Activated CD8-positive, alpha-beta T cell treated with anti-CD3 and anti-CD28 coated beads, Interleukin-2, amount 10 ng/mL, durations not matched to agents 7 days and 5 days (primary cell): ENCODE measurements at regions of chr15 and their contacts with region 1.

Region 1: DNA sequence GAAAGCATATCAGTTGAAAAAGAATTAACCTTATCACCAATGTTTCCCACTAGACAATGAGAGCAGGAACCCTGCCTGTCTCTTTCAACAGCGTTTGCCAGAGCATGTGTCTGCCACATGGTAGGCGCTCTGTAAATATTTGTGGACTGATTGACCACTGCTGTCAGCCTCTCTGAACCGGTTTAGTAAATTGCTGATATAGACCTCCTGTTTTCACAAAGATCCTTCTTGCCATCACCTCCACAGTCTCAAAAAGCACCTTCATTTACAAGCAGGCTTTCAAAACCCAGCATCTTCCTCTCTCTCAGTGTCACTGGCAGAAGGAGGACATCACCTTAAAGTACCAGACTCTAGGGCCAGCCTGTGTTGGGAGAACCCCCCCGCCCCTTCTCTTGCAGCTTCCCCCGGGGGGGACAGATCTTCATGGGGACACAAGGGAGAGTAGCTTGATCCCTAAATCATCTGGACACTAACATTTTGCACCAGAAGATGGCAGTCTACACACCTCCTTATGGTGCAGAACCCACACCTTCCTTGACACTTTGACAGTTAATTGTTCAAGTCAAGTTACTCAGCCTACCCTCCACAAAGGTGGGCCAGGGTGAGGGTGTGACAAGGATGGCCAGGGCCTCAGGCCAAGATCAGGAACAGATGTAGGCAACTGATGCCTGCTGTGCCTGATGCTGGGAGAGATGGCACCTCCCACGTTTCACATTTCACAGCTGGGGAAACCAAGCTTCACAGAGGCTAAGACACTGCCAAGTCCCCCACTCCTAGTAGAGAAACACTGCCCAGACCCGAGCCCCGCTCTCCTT is 37.8 kb upstream of the USP3 start:
- DNase-seq: peak; percentile 77
- ATAC-seq: peak; percentile 93
- H3K4me3 Mint-ChIP-seq: no peak overlapping the region
- H3K27ac Mint-ChIP-seq: no peak overlapping the region
- H3K4me1 Mint-ChIP-seq: peaks cover 9% of the 10 kb centered on the region
- H3K27me3 Mint-ChIP-seq: peaks cover 5% of the 10 kb centered on the region

Region 2: GRCh38 chr15:63389902-63390670 is 76.5 kb before region 1 on chr15:
- CTCF ChIA-PET with region 1: no interaction called
- POLR2A ChIA-PET with region 1: no interaction called
- DNase-seq: no peak
- ATAC-seq: no peak
- H3K4me3 Mint-ChIP-seq: no peak overlapping the region
- H3K27ac Mint-ChIP-seq: no peak overlapping the region
- H3K4me1 Mint-ChIP-seq: peaks cover 6% of the 10 kb centered on the region
- H3K27me3 Mint-ChIP-seq: peaks cover 38% of the 10 kb centered on the region

Region 3: GRCh38 chr15:63436872-63437375 is 29.7 kb before region 1 on chr15:
- CTCF ChIA-PET with region 1: interaction called, 14 read pairs
- POLR2A ChIA-PET with region 1: interaction called, 3 read pairs
- DNase-seq: peak; percentile 87
- ATAC-seq: peak; percentile 98
- H3K4me3 Mint-ChIP-seq: peak overlapping the region; percentile 29
- H3K27ac Mint-ChIP-seq: peak overlapping the region; percentile 94
- H3K4me1 Mint-ChIP-seq: peaks cover 29% of the 10 kb centered on the region
- H3K27me3 Mint-ChIP-seq: no peaks in the 10 kb centered on the region

Region 4: DNA sequence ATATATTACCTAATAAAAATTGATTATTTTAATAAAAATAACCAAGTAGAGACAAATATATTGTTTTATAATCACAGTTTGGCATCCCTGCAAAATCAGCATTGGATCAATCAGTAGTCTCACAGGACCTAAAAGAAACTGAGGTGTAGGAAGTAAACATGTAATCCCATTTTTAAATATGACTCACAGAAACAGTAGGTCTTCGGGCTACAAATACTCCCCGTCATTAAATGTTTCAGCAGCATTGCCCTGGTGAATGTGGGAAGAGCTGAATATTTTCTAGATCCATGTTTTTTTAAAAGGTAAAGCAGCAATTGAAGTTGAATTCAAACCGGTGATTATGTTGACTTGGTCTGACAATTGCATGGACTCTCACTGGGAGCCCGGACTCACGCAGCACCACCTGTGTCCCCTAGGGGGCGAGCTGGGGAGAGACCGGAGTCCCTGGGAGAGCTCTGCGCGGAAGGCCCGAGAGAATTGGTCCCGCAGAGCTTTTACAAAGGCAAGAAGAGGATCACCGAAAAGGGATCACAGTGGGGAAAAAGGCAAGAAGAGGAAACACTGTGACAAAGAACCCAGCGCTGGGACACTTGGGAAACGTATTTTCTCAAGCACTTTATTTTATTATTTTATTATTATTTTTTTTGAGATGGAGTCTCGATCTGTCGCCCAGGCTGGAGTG is 20.6 kb after region 1 on chr15:
- CTCF ChIA-PET with region 1: interaction called, 36 read pairs
- POLR2A ChIA-PET with region 1: interaction called, 5 read pairs
- DNase-seq: peak; percentile 92
- ATAC-seq: peak; percentile 96
- H3K4me3 Mint-ChIP-seq: no peak overlapping the region
- H3K27ac Mint-ChIP-seq: peak overlapping the region; percentile 62
- H3K4me1 Mint-ChIP-seq: peaks cover 53% of the 10 kb centered on the region
- H3K27me3 Mint-ChIP-seq: no peaks in the 10 kb centered on the region

Region 5: DNA sequence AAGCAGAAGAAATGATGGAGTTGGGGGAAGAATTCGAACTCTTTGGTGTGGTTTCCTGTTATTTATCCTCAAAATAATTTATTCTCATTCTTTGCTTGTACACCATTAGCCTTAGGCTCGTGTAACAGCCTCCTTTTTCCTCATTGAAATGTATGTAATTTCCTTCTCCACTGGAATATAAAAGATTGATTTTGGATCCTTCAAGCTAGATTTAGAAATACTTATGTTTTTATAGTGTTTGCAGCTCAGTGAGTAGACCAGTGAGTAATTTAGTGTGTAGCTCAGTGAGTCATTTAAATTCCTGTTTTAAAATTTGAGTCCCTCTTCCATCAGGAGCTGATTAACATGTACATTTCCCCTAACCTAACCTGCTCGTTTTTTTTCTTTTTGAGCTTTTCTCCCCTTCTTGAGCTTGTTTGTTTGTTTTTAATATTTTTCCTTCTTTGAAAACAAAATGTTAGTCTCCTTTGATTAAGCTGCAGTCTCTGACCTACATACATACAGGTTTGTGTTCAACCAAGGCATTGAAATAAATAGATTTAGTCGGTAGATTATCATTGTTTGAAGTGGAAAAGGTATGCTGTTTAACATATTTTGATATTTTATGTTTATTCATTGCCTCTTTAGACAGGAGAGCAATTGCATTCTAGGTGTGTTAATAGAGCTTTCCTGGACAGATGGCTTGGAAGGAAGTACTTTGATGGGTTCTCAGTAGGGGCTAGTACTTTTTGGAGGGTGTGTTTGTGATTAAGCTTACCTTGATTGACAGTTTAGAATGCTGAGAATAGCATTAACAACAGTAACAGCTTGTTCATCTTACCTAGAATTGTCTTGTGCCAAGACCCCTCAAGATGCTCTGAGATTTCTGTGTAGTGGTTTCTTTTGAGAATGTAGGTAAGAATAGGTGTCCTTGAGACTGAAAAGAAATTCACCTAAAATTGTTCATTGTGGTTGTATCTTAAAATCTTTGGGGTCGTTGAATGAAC is 43.7 kb after region 1 on chr15:
- CTCF ChIA-PET with region 1: interaction called, 38 read pairs
- POLR2A ChIA-PET with region 1: interaction called, 17 read pairs
- DNase-seq: no peak
- ATAC-seq: no peak
- H3K4me3 Mint-ChIP-seq: no peak overlapping the region
- H3K27ac Mint-ChIP-seq: peak overlapping the region; percentile 21
- H3K4me1 Mint-ChIP-seq: peaks cover 83% of the 10 kb centered on the region
- H3K27me3 Mint-ChIP-seq: no peaks in the 10 kb centered on the region

Region 6: DNA sequence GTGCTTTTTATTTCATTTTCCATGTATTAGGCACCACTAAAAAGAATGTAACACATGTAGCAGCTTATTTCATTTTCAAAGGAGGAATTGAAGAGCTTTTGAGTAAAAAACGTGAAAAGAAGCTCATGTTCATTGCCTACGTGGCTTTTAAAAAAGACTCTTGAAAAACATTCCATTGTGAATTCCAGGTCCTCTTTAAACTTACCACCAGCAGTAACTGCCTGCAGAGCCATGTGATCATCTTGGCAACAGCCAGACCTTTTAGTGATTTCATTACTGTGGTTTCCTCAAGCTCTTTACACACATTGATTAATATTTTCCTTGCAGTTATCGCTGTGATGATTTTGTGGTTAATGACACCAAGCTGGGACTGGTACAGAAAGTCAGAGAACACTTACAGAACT is 86.8 kb after region 1 on chr15:
- CTCF ChIA-PET with region 1: interaction called, 13 read pairs
- POLR2A ChIA-PET with region 1: no interaction called
- DNase-seq: no peak
- ATAC-seq: no peak
- H3K4me3 Mint-ChIP-seq: no peak overlapping the region
- H3K27ac Mint-ChIP-seq: no peak overlapping the region
- H3K4me1 Mint-ChIP-seq: peaks cover 23% of the 10 kb centered on the region
- H3K27me3 Mint-ChIP-seq: no peaks in the 10 kb centered on the region

Region 7: DNA sequence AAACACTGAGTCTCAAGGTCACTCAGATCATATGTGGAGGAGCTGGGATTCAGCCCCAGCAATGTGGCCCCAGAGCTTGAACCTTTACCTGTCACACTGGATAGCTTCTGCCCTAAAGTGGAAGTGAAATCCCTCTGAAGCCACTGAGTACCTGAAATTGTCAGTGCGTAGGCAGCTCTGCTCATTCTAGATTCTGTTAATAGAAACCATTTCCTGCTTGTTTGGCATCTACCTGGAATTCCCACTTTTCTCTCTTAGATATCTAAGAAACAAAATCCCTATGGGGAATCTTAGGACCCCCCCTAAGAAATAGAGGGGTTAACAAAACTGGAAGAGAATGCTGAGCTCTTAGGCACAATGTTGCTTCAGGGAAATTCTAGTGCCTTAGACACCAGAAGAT is 160.4 kb after region 1 on chr15:
- CTCF ChIA-PET with region 1: no interaction called
- POLR2A ChIA-PET with region 1: no interaction called
- DNase-seq: no peak
- ATAC-seq: no peak
- H3K4me3 Mint-ChIP-seq: no peak overlapping the region
- H3K27ac Mint-ChIP-seq: no peak overlapping the region
- H3K4me1 Mint-ChIP-seq: peaks cover 6% of the 10 kb centered on the region
- H3K27me3 Mint-ChIP-seq: no peaks in the 10 kb centered on the region

Region 8: DNA sequence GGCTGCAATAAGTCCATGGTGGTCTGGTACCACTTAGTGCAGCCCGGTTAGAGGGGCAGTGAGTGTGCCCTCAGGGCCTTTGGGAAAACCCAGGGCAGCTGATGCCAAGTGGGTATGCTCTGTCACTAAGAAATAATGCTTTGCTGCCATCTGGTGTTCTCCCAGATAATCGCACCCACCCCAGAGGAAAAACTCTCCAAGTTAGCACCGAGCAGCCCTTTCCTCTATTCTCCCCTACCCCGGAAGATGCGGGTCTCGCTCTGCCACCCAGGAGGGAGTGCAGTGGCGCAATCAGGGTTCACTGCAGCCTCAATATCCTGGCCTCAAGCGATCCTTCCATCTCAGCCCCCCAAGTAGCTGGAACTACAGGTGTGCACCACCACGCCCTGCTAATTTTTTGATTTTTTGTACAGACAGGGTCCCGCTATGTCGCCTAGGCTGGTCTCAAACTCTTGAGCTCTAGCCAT is 601.0 kb after region 1 on chr15:
- CTCF ChIA-PET with region 1: interaction called, 20 read pairs
- POLR2A ChIA-PET with region 1: no interaction called
- DNase-seq: peak; percentile 79
- ATAC-seq: peak; percentile 89
- H3K4me3 Mint-ChIP-seq: no peak overlapping the region
- H3K27ac Mint-ChIP-seq: peak overlapping the region; percentile 71
- H3K4me1 Mint-ChIP-seq: peaks cover 26% of the 10 kb centered on the region
- H3K27me3 Mint-ChIP-seq: no peaks in the 10 kb centered on the region